ENCODE measurements at regions of chr5 and their contacts with region 1.

Region 1: GRCh38 chr5:114830114-114830513 is 339.6 kb downstream of the TRIM36 start:
- DNase-seq: no peak
- ATAC-seq: no peak

Region 2: DNA sequence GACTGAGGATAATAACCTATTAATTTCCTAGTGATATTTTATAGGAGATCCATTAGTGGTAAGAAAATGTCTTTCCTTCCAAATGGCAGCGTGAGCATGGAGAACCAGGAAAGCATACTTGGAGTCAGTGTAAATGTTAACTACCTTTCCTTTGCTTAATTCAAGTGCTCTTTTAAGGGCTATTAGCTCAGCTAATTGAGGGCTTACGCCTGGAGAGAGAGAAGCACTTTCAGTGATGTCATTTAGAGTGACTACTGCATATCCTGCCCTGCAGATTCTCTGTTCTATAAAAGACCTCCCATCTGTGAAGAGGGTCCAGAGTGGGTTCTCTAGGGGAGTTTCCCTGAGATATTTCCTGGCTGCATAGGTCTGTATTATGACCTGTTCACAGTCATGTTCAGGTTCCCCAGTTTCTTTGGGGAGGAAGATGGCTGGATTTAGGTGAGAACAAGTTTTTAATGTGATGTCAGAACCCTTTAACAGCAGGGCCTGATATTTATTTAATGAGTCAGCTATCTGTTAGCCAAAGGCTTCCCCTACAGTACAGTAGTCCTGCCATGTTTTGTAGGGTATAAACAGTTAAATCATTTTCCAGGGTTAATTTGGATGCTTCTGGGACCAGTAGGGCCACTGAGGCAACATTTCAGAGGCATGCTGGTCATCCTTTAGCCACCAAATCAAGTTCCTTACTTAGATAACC is 250.0 kb after region 1 on chr5:
- intact Hi-C with region 1: loop called (anchors 5 kb)
- DNase-seq: no peak
- ATAC-seq: no peak

Region 3: DNA sequence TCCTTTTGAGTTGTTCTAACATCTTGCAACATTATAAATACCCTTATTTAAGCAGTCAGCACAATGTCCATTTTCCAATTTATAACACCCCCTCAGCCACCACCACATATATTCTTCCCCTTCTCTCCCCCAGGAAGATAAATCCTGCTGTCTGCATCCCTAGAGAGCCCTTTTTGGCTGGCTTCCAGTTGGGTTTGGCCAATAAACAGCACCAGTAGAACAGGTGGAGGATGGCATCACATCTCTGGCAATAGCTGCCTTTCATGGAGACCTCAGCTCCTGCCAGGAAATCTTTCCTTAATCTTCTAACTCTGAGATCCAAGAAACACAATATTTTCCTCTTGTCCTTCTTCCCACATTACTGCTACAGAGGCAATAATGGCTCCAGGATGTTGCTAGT is 285.9 kb after region 1 on chr5:
- intact Hi-C with region 1: no loop called
- DNase-seq: no peak
- ATAC-seq: no peak

Measured in sciatic nerve (tissue), 2 donors.